ENCODE measurements at regions of chr11 and their contacts with region 1.

Region 1: GRCh38 chr11:82959987-82960778 is 58.6 kb downstream of the DDIAS start:
- DNase-seq: peak; percentile 65
- ATAC-seq: peak; percentile 93
- H3K4me3 ChIP-seq: peak overlapping the region; percentile 3; the same call in 1 of the 2 replicates
- H3K27ac ChIP-seq: peak overlapping the region; percentile 72
- H3K4me1 ChIP-seq: peaks cover 17% of the 10 kb centered on the region
- H3K27me3 ChIP-seq: no peaks in the 10 kb centered on the region
- CTCF ChIP-seq: no peak
- EP300 ChIP-seq: peak in 1 of 2 experiments; percentile 87; a peak in 2 of 4 replicates
- POLR2A ChIP-seq: no peak
- RAD21 ChIP-seq: no peak

Region 2: GRCh38 chr11:82756765-82757639 is 203.2 kb before region 1 on chr11:
- CTCF ChIA-PET with region 1: no interaction called
- POLR2A ChIA-PET with region 1: no interaction called
- RAD21 ChIA-PET with region 1: no interaction called
- SMC1A ChIA-PET with region 1: no interaction called
- in situ Hi-C with region 1: no loop called
- intact Hi-C with region 1: no loop called
- DNase-seq: no peak
- ATAC-seq: peak; percentile 42; the same call in 2 of the 3 replicates
- H3K4me3 ChIP-seq: peak overlapping the region; percentile 39; the same call in 1 of the 2 replicates
- H3K27ac ChIP-seq: peak overlapping the region; percentile 12; the same call in 1 of the 2 replicates
- H3K4me1 ChIP-seq: peaks cover 14% of the 10 kb centered on the region
- H3K27me3 ChIP-seq: 0 out of 4 replicates have a peak, but pooled peaks cover 0 to 2% of the 10 kb centered on the region in 2 experiments
- CTCF ChIP-seq: no peak
- EP300 ChIP-seq: no peak
- POLR2A ChIP-seq: no peak
- RAD21 ChIP-seq: no peak

Region 3: DNA sequence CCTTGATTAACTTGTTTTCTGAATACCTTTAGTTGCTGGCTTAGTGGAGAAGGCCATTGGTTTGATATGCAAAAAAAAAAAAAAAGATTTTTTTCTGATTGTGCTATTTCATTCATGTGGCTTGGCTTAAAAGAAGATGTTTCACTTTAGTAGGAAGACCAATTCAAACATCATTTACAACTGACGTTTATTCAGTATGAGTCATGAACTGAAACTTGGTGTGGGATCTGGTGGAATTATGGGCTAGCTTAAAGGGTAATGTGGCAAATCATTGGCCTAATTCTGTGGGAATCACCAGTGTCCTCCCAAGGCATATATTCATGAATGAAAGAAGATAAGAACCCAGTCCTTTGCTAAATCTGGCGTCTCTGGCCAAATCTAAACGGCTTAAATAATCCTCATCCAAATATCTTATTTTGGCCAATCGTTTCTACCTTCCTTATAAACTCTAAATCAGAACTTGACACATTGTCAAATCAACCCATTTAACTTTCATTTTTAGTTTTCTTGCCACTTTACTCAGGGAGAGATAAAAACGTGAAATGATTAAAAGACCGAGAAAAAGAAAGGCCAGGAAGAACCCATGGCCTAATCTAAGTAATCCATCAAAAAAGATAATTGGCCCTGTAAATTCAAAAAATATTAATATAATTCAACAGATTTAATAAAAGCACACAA is 18.4 kb after region 1 on chr11:
- CTCF ChIA-PET with region 1: interaction called, 3 read pairs
- POLR2A ChIA-PET with region 1: no interaction called
- RAD21 ChIA-PET with region 1: interaction called, 8 read pairs
- SMC1A ChIA-PET with region 1: interaction called, 14 read pairs
- in situ Hi-C with region 1: no loop called
- intact Hi-C with region 1: no loop called
- DNase-seq: peak; percentile 56
- ATAC-seq: peak; percentile 78
- H3K4me3 ChIP-seq: 0 out of 2 replicates have a peak overlapping the region, but pooled peaks have one; percentile 21
- H3K27ac ChIP-seq: peak overlapping the region; percentile 58
- H3K4me1 ChIP-seq: peaks cover 15% of the 10 kb centered on the region
- H3K27me3 ChIP-seq: no peaks in the 10 kb centered on the region
- CTCF ChIP-seq: no peak
- EP300 ChIP-seq: peak; percentile 80 to 84; a peak in 3 of 4 replicates
- POLR2A ChIP-seq: no peak
- RAD21 ChIP-seq: 0 out of 2 replicates have a peak, but pooled peaks have one; percentile 7

Region 4: GRCh38 chr11:82987997-82988396 is 27.8 kb after region 1 on chr11:
- CTCF ChIA-PET with region 1: interaction called, 3 read pairs
- POLR2A ChIA-PET with region 1: interaction called, 11 read pairs
- RAD21 ChIA-PET with region 1: interaction called, 3 read pairs
- SMC1A ChIA-PET with region 1: interaction called, 6 read pairs
- in situ Hi-C with region 1: no loop called
- intact Hi-C with region 1: no loop called
- DNase-seq: no peak
- ATAC-seq: no peak
- H3K4me3 ChIP-seq: no peak overlapping the region
- H3K27ac ChIP-seq: no peak overlapping the region
- H3K4me1 ChIP-seq: no peaks in the 10 kb centered on the region
- H3K27me3 ChIP-seq: no peaks in the 10 kb centered on the region
- CTCF ChIP-seq: no peak
- EP300 ChIP-seq: no peak
- POLR2A ChIP-seq: no peak
- RAD21 ChIP-seq: no peak

Region 5: DNA sequence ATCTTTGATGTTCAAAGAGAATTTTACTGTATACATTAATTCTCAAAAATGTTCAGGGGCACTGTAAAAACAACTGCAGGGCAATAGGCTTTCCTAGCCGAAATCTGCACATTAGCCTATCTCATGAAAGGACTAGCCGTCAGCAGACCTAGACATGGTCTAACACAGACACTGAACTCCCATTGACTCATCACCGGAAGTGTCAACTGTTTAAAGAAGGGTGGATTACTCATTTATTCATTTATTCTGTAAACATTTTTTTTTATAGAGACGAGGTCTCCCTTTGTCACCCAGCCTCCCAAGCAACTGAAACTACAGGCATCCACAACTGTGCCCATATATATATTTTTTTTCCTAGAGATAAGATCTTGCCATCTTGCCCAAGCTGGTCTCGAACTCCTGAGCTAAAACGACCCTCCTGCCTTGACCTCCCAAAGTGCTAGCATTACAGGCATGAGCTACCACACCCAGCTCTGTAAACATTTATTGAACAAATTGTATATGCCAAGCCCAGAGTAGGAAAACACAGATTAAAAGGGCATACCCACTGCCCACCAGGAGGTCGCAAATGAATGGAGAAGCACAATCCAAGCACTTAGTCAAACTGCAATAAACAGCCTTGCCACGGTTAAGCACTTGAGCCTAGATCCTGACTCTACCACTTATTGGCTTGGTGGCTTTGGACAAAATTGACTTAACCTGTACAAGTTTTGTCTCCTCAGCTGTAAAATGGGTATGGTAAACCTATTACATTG is 85.0 kb after region 1 on chr11:
- CTCF ChIA-PET with region 1: no interaction called
- POLR2A ChIA-PET with region 1: no interaction called
- RAD21 ChIA-PET with region 1: no interaction called
- SMC1A ChIA-PET with region 1: no interaction called
- in situ Hi-C with region 1: no loop called
- intact Hi-C with region 1: no loop called
- DNase-seq: no peak
- ATAC-seq: peak; percentile 85
- H3K4me3 ChIP-seq: no peak overlapping the region
- H3K27ac ChIP-seq: no peak overlapping the region
- H3K4me1 ChIP-seq: peaks cover 8% of the 10 kb centered on the region
- H3K27me3 ChIP-seq: no peaks in the 10 kb centered on the region
- CTCF ChIP-seq: no peak
- EP300 ChIP-seq: no peak
- POLR2A ChIP-seq: no peak
- RAD21 ChIP-seq: no peak